Breast epithelium (tissue), 4 donors: ENCODE measurements at regions of chr3 and their contacts with region 1.

Region 1: DNA sequence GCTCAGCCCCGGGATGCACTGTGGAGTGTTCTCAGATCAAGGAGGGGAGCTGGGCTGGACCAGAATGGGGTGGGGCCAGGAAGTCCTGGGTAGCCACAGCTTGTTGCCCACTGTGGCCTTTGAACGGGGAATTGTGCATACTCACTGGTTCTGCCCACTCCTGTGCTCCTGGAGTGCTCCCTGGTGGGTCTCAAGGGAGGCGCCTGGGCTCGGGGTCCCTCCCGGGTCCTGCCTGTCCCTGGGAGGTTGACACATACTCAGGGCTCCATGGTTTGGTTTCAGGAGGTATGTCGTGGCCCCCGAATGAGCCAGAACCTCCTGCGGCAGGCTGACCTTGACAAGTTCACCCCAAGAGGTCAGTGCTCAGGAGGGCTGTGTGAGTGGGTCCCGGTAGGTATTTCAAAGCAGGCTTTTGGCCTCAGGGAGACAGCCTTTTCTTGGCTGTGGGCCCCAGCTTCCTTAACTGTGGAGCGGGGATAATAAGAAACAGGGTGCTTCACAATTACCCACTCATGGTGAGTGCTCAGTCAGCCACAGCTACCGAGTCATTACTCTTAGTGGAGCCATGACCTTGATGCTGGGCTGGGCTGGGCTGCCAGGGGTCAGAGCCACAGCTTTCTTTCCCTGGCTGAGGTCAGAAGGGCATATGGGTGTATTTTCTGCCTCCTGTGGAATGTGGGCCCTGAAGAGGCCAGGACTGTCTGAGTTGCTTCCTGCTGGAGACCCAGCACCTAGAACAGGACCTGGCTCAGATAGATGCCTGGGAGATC is 7.6 kb downstream of the DNAH1 start:
- DNase-seq: no peak
- H3K4me3 ChIP-seq: no peak overlapping the region
- H3K27ac ChIP-seq: no peak overlapping the region
- H3K4me1 ChIP-seq: no peaks in the 10 kb centered on the region
- H3K27me3 ChIP-seq: no peaks in the 10 kb centered on the region
- CTCF ChIP-seq: no peak
- POLR2A ChIP-seq: no peak

Region 2: DNA sequence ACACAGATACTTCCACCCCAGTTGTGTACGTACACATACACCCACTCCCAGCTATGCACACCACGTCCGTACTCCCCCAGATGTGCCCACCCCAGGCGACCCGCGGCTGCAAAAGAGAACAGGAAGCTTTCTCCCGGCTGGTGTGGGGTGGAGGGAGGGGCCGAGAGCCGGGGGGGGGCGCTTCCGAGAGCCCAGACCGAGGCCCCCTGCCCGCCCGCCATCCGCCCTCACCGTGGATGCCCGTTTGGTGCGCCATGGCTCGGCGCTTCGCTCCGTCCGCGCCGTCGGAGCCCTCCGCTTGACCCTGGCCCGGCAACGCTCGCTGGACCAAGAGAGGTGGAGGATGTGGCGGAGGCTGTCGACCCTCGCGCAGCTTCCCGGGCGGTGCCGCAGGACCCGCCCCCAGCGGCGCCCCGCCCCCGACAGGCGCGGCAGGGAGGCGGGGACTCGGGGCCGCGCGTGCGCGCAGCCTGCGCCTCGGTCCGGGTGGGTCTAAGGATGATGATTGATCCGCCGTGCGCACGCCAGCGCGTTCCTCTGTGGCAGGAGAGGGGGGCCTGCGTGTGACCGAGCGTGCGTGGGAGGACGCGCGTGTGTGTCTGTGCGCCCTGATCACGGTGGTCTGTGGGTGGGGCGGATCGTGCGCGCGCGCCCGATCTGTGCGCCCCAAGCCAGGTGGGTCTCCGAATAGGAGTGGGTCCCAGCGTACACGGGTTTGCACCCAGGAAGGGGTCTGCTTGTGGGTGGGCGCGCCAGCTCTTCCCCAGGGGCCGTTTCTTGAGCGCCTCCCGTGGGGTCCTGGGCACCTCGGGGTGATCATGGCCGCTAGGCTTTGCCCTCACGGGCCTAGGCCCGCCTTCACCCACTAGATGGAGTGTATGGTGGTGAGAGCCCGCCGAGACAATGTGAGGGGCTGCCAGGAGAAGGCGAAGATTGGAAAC is 84.7 kb before region 1 on chr3 and contains the start of gene TWF2:
- intact Hi-C with region 1: loop called (anchors 10 kb)
- DNase-seq: peak in 1 of 2 donors; percentile 59
- H3K4me3 ChIP-seq: peak within 1 kb of the TSS; percentile 70 to 96 (median 78)
- H3K27ac ChIP-seq: peak within 1 kb of the TSS; percentile 94 to 95
- H3K4me1 ChIP-seq: peaks cover 13 to 15% of the 10 kb centered on the region in 2 donors
- H3K27me3 ChIP-seq: no peaks in the 10 kb centered on the region
- CTCF ChIP-seq: peak in 1 of 3 donors; percentile 34
- POLR2A ChIP-seq: no peak
- total RNA-seq, gene TWF2: 52.7 to 84.5 (median 65.2) TPM

Region 3: GRCh38 chr3:52306978-52307377 is 16.7 kb before region 1 on chr3:
- intact Hi-C with region 1: loop called (anchors 1 kb)
- DNase-seq: no peak
- H3K4me3 ChIP-seq: no peak overlapping the region
- H3K27ac ChIP-seq: no peak overlapping the region
- H3K4me1 ChIP-seq: no peaks in the 10 kb centered on the region
- H3K27me3 ChIP-seq: no peaks in the 10 kb centered on the region
- CTCF ChIP-seq: no peak
- POLR2A ChIP-seq: no peak